ENCODE measurements at regions of chr17 and their contacts with region 1.

Region 1: GRCh38 chr17:81428948-81429774 is 33.9 kb downstream of the BAHCC1 start:
- DNase-seq: peak; percentile 74
- H3K4me3 ChIP-seq: no peak overlapping the region
- H3K27ac ChIP-seq: no peak overlapping the region
- H3K4me1 ChIP-seq: peaks cover 5% of the 10 kb centered on the region
- H3K27me3 ChIP-seq: no peaks in the 10 kb centered on the region
- CTCF ChIP-seq: no peak
- POLR2A ChIP-seq: no peak

Region 2: GRCh38 chr17:81309070-81309905 is 119.9 kb before region 1 on chr17:
- CTCF ChIA-PET with region 1: interaction called, 10 read pairs
- POLR2A ChIA-PET with region 1: no interaction called
- dilution Hi-C with region 1: no loop called
- intact Hi-C with region 1: no loop called
- DNase-seq: peak; percentile 28
- H3K4me3 ChIP-seq: no peak overlapping the region
- H3K27ac ChIP-seq: no peak overlapping the region
- H3K4me1 ChIP-seq: peaks cover 2% of the 10 kb centered on the region
- H3K27me3 ChIP-seq: no peaks in the 10 kb centered on the region
- CTCF ChIP-seq: peak; percentile 34 to 37
- POLR2A ChIP-seq: no peak

Region 3: DNA sequence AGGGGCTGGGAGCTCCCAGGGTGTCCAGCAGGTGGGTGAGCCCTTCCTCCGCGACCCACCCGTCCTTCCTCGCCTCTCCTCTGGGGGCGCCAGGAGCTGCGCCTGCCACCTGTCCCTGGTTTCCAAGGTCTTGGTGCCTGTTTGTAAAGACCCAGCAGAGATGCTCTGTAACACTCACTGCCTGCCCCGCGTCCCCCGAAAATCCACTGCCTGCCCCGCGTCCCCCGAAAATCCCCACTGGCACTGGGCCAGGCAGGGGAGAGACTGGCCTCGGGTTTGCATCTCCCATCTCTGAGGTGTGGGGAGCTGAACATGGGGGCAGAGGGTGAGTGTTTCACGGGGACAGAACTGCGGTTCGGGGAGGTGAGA is 11.7 kb after region 1 on chr17:
- CTCF ChIA-PET with region 1: interaction called, 29 read pairs
- POLR2A ChIA-PET with region 1: no interaction called
- dilution Hi-C with region 1: no loop called
- intact Hi-C with region 1: no loop called
- DNase-seq: peak; percentile 19
- H3K4me3 ChIP-seq: no peak overlapping the region
- H3K27ac ChIP-seq: no peak overlapping the region
- H3K4me1 ChIP-seq: no peaks in the 10 kb centered on the region
- H3K27me3 ChIP-seq: no peaks in the 10 kb centered on the region
- CTCF ChIP-seq: peak; percentile 48 to 75
- POLR2A ChIP-seq: no peak

Measured in endothelial cell of umbilical vein (primary cell).